Activated CD8-positive, alpha-beta memory T cell treated with anti-CD3 and anti-CD28 coated beads, Interleukin-2, amount 10 ng/mL, durations not matched to agents 7 days and 5 days (primary cell): ENCODE measurements at regions of chr1 and their contacts with region 1.

Region 1: GRCh38 chr1:147389532-147390524 is 147.3 kb downstream of the CHD1L start:
- DNase-seq: no peak
- ATAC-seq: peak; percentile 57
- H3K4me3 Mint-ChIP-seq: no peak overlapping the region
- H3K27ac Mint-ChIP-seq: no peak overlapping the region
- H3K4me1 Mint-ChIP-seq: no peaks in the 10 kb centered on the region
- H3K27me3 Mint-ChIP-seq: peaks cover 24% of the 10 kb centered on the region

Region 2: GRCh38 chr1:147273409-147274336 is 116.2 kb before region 1 on chr1:
- CTCF ChIA-PET with region 1: interaction called, 31 read pairs
- DNase-seq: no peak
- ATAC-seq: no peak
- H3K4me3 Mint-ChIP-seq: no peak overlapping the region
- H3K27ac Mint-ChIP-seq: no peak overlapping the region
- H3K4me1 Mint-ChIP-seq: no peaks in the 10 kb centered on the region
- H3K27me3 Mint-ChIP-seq: no peaks in the 10 kb centered on the region

Region 3: GRCh38 chr1:147377263-147378246 is 12.3 kb before region 1 on chr1:
- CTCF ChIA-PET with region 1: interaction called, 15 read pairs
- DNase-seq: no peak
- ATAC-seq: no peak
- H3K4me3 Mint-ChIP-seq: no peak overlapping the region
- H3K27ac Mint-ChIP-seq: no peak overlapping the region
- H3K4me1 Mint-ChIP-seq: no peaks in the 10 kb centered on the region
- H3K27me3 Mint-ChIP-seq: peaks cover 19% of the 10 kb centered on the region